ENCODE measurements at regions of chr2 and their contacts with region 1.

Region 1: GRCh38 chr2:219530048-219530963 is 13.3 kb downstream of the CHPF start:
- H3K4me3 Mint-ChIP-seq: no peak overlapping the region
- H3K27ac Mint-ChIP-seq: no peak overlapping the region
- H3K4me1 Mint-ChIP-seq: peaks cover 6% of the 10 kb centered on the region
- H3K27me3 Mint-ChIP-seq: peaks cover 77% of the 10 kb centered on the region

Region 2: GRCh38 chr2:219402665-219403515 is 127.4 kb before region 1 on chr2:
- intact Hi-C with region 1: loop called (anchors 2 kb)
- H3K4me3 Mint-ChIP-seq: no peak overlapping the region
- H3K27ac Mint-ChIP-seq: peak overlapping the region; percentile 99
- H3K4me1 Mint-ChIP-seq: peaks cover 72% of the 10 kb centered on the region
- H3K27me3 Mint-ChIP-seq: peaks cover 16% of the 10 kb centered on the region

Region 3: DNA sequence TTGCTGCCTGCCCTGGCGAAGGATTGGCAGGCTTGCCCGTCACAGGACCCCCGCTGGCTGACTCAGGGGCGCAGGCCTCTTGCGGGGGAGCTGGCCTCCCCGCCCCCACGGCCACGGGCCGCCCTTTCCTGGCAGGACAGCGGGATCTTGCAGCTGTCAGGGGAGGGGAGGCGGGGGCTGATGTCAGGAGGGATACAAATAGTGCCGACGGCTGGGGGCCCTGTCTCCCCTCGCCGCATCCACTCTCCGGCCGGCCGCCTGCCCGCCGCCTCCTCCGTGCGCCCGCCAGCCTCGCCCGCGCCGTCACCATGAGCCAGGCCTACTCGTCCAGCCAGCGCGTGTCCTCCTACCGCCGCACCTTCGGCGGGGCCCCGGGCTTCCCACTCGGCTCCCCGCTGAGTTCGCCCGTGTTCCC is 112.1 kb before region 1 on chr2 and contains the start of gene DES:
- intact Hi-C with region 1: no loop called
- H3K4me3 Mint-ChIP-seq: no peak within 1 kb of the TSS
- H3K27ac Mint-ChIP-seq: peak within 1 kb of the TSS; percentile 38
- H3K4me1 Mint-ChIP-seq: peaks cover 18% of the 10 kb centered on the region
- H3K27me3 Mint-ChIP-seq: peaks cover 65% of the 10 kb centered on the region

Region 4: GRCh38 chr2:219459460-219460311 is 70.6 kb before region 1 on chr2:
- intact Hi-C with region 1: loop called (anchors 1 kb)
- H3K4me3 Mint-ChIP-seq: no peak overlapping the region
- H3K27ac Mint-ChIP-seq: no peak overlapping the region
- H3K4me1 Mint-ChIP-seq: peaks cover 10% of the 10 kb centered on the region
- H3K27me3 Mint-ChIP-seq: peaks cover 8% of the 10 kb centered on the region

Region 5: DNA sequence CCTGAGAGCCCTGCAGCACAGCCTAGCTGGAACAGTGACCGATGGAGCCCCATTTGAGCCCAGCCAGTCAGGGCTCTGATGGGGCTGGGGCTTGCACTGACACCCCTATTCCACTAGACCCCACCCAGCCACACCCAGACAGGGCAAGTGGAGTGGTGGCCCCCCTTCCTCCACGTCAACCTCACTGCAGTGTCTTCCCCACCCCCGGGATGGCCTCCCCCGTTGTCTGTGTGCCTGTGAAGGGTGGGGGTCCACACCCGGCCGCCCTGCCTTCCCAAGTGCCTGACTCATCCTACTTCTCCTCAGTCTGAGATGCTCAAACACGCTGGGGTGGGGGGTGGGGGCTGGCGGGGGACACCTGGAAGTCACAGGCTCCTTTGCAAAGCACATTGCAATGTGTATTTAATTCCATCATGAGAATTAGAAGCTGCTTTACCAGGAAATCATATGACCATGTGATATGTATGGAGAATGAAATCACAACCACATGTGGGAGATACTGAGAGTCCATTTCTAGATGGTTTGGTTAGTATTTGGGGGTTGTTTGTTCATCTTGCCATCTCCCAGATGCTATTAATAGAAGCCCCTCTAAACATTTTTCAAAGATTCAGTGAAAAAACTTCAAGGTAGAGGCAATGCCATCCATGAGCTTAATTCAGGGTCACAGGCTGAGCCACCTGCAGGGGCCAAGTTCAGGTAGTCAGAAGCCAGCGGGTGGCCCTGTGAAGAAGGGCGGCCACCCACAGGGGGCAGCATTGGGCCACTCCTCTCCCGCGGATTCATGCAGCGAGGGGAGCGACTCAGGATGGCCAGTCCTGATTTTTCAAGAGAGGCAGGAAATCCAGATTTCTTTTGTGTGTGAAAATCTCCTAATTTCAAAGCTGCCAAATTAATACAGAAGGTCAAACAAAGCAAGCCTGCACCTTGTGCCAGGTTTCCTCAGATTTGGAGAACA is 54.3 kb before region 1 on chr2:
- intact Hi-C with region 1: loop called (anchors 1 kb)
- H3K4me3 Mint-ChIP-seq: no peak overlapping the region
- H3K27ac Mint-ChIP-seq: no peak overlapping the region
- H3K4me1 Mint-ChIP-seq: peaks cover 5% of the 10 kb centered on the region
- H3K27me3 Mint-ChIP-seq: peaks cover 40% of the 10 kb centered on the region

Region 6: DNA sequence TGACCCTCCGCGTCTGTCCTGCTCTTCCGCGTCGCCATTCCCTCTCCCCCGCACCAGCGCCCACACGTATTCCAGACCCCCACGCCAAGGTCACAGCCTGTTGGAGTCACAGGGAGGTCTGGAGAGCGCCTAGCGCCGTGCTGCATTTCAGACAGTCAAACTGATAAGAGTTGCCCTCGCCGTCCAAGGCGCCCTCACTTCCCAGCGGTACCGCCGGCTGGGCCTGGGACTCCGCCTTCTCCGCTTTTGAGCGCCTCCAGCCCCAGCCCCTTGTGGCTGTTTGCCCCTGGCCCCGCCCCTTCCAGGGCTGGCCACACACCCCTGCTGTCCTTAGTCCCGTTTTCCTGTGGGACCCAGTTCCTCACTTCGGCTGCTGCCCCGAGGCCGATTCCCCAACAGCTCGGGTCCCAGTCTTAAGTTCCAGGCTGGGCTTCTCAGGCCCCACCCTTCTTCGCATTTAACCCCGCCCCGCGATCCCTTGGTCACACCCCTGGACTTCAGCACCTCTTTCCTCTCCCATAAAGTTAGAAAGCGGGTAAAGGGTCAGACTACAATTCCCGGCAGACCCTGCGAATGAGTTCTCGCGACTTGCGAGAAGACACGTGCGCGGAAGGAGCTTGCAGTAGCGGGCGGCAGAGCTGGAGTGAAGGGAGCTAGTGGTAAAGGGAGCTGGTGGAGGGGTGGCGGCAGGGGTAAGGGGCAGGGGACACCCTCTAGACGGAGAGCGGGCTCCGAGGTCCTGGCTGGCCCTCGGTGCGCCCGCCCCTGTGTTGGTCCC is 31.8 kb before region 1 on chr2 and contains the start of gene GMPPA:
- intact Hi-C with region 1: loop called (anchors 1 kb)
- H3K4me3 Mint-ChIP-seq: peak within 1 kb of the TSS; percentile 90
- H3K27ac Mint-ChIP-seq: peak within 1 kb of the TSS; percentile 94
- H3K4me1 Mint-ChIP-seq: peaks cover 40% of the 10 kb centered on the region
- H3K27me3 Mint-ChIP-seq: peaks cover 43% of the 10 kb centered on the region

Region 7: DNA sequence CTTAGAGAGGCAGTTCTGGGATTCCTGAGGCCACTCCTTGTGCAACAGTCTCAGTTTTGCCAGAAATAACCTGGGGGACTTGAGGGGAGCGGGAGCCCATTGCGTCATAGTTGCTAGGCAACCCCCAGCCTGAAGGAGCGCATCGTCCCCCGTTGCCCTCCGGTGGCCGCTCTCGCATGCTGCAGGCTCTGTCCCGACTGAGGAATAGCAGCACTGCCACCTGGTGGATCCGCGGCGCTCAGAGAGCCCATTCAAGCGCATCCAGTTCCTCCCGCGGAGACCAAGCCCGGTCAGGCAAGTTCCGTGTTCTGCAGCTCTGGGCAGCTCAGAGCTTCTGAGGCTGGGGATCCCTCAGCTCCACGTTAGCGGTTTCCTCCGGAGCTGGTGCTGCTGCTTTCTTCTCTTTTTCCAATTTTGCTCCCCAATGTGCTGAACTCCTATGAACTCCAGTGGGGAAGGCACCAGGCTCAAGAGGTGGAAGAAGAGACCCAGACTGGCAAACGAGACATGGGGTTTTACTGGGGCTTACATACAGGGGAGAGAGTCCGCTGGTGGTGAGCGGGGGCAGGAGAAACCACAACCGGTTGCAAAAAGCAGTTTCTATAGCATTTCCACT is 112.3 kb after region 1 on chr2:
- intact Hi-C with region 1: no loop called
- H3K4me3 Mint-ChIP-seq: no peak overlapping the region
- H3K27ac Mint-ChIP-seq: no peak overlapping the region
- H3K4me1 Mint-ChIP-seq: peaks cover 29% of the 10 kb centered on the region
- H3K27me3 Mint-ChIP-seq: peaks cover 26% of the 10 kb centered on the region